B cell (primary cell): ENCODE measurements at regions of chr2 and their contacts with region 1.

Region 1: GRCh38 chr2:54789878-54790277 is 66.4 kb downstream of the EML6 start:
- DNase-seq: no peak
- ATAC-seq: no peak
- H3K4me3 ChIP-seq: no peak overlapping the region
- H3K4me3 Mint-ChIP-seq: peak overlapping the region; percentile 52
- H3K27ac ChIP-seq: no peak overlapping the region
- H3K27ac Mint-ChIP-seq: no peak overlapping the region
- H3K4me1 ChIP-seq: peaks cover 14 to 29% of the 10 kb centered on the region in 2 donors
- H3K4me1 Mint-ChIP-seq: peaks cover 38% of the 10 kb centered on the region
- H3K27me3 ChIP-seq: no peaks in the 10 kb centered on the region
- H3K27me3 Mint-ChIP-seq: no peaks in the 10 kb centered on the region
- CTCF ChIP-seq: no peak

Region 2: GRCh38 chr2:54750040-54750439 is 39.8 kb before region 1 on chr2:
- CTCF ChIA-PET with region 1: no interaction called
- POLR2A ChIA-PET with region 1: no interaction called
- intact Hi-C with region 1: loop called (anchors 1 kb)
- DNase-seq: no peak
- ATAC-seq: no peak
- H3K4me3 ChIP-seq: no peak overlapping the region
- H3K4me3 Mint-ChIP-seq: no peak overlapping the region
- H3K27ac ChIP-seq: no peak overlapping the region
- H3K27ac Mint-ChIP-seq: no peak overlapping the region
- H3K4me1 ChIP-seq: peaks cover 0 to 1% of the 10 kb centered on the region in 2 donors
- H3K4me1 Mint-ChIP-seq: peaks cover 2% of the 10 kb centered on the region
- H3K27me3 ChIP-seq: no peaks in the 10 kb centered on the region
- H3K27me3 Mint-ChIP-seq: no peaks in the 10 kb centered on the region
- CTCF ChIP-seq: no peak